Natural killer cell (primary cell): ENCODE measurements at regions of chr3 and their contacts with region 1.

Region 1: GRCh38 chr3:67113802-67114407 is 115.8 kb downstream of the KBTBD8 start:
- DNase-seq: peak; percentile 55 to 85
- ATAC-seq: peak; percentile 88 to 99 (median 97)
- H3K4me3 ChIP-seq: no peak overlapping the region
- H3K4me3 Mint-ChIP-seq: no peak overlapping the region
- H3K27ac ChIP-seq: no peak overlapping the region
- H3K27ac Mint-ChIP-seq: no peak overlapping the region
- H3K4me1 ChIP-seq: no peaks in the 10 kb centered on the region
- H3K4me1 Mint-ChIP-seq: peaks cover 0 to 9% of the 10 kb centered on the region in 2 donors
- H3K27me3 ChIP-seq: no peaks in the 10 kb centered on the region
- H3K27me3 Mint-ChIP-seq: peaks cover 5 to 7% of the 10 kb centered on the region in 2 donors
- CTCF ChIP-seq: peak; percentile 81

Region 2: GRCh38 chr3:66971891-66972551 is 141.9 kb before region 1 on chr3:
- intact Hi-C with region 1: loop called (anchors 5 kb)
- DNase-seq: peak; percentile 38 to 79
- ATAC-seq: peak; percentile 87 to 94 (median 91)
- H3K4me3 ChIP-seq: peak overlapping the region; percentile 31
- H3K4me3 Mint-ChIP-seq: peak overlapping the region; percentile 83
- H3K27ac ChIP-seq: peak overlapping the region; percentile 47
- H3K27ac Mint-ChIP-seq: peak overlapping the region in 1 of 2 donors; percentile 81
- H3K4me1 ChIP-seq: peaks cover 9% of the 10 kb centered on the region
- H3K4me1 Mint-ChIP-seq: peaks cover 12 to 13% of the 10 kb centered on the region in 2 donors
- H3K27me3 ChIP-seq: peaks cover 3% of the 10 kb centered on the region
- H3K27me3 Mint-ChIP-seq: peaks cover 6 to 20% of the 10 kb centered on the region in 2 donors
- CTCF ChIP-seq: peak; percentile 88

Region 3: GRCh38 chr3:67349551-67350174 is 235.8 kb after region 1 on chr3:
- intact Hi-C with region 1: no loop called
- DNase-seq: no peak
- ATAC-seq: peak in 1 of 3 donors; percentile 10
- H3K4me3 ChIP-seq: no peak overlapping the region
- H3K4me3 Mint-ChIP-seq: no peak overlapping the region
- H3K27ac ChIP-seq: no peak overlapping the region
- H3K27ac Mint-ChIP-seq: no peak overlapping the region
- H3K4me1 ChIP-seq: no peaks in the 10 kb centered on the region
- H3K4me1 Mint-ChIP-seq: no peaks in the 10 kb centered on the region
- H3K27me3 ChIP-seq: no peaks in the 10 kb centered on the region
- H3K27me3 Mint-ChIP-seq: no peaks in the 10 kb centered on the region
- CTCF ChIP-seq: no peak

Region 4: GRCh38 chr3:68876112-68876713 is 1762.3 kb after region 1 on chr3:
- intact Hi-C with region 1: loop called (anchors 1 kb)
- DNase-seq: peak in 1 of 2 donors; percentile 74
- ATAC-seq: peak in 2 of 3 donors; percentile 55 to 74
- H3K4me3 ChIP-seq: no peak overlapping the region
- H3K4me3 Mint-ChIP-seq: no peak overlapping the region
- H3K27ac ChIP-seq: no peak overlapping the region
- H3K27ac Mint-ChIP-seq: no peak overlapping the region
- H3K4me1 ChIP-seq: no peaks in the 10 kb centered on the region
- H3K4me1 Mint-ChIP-seq: no peaks in the 10 kb centered on the region
- H3K27me3 ChIP-seq: peaks cover 2% of the 10 kb centered on the region
- H3K27me3 Mint-ChIP-seq: peaks cover 8 to 40% of the 10 kb centered on the region in 2 donors
- CTCF ChIP-seq: peak; percentile 85

Region 5: DNA sequence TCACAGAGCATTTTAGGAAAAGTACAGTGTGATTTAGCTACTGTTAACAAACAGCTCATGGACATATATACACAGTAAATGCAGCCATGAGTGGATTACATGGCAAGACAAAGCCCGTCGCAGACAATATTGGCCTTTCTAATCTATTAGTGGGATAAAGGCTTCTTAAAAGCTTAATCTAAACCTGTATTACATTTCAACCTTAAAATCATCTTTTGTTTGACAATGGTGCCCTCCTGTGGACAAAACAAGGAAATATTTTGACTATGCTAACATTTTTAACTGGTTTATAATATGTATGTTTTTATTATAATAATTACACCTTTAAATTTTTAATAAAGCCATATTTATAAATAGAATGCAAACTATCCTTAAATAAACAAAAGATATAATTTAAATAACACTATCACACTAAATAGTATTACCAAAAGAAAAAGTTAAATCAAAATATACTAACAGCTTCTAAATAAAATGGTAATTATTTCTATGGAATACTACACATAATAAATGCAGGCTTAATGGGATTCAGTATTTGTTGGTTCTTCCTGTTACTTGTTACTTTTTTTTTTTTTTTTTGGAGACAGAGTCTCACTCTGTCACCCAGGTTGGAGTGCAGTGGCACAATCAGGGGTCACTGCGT is 1779.8 kb after region 1 on chr3:
- intact Hi-C with region 1: loop called (anchors 5 kb)
- DNase-seq: peak in 1 of 2 donors; percentile 68
- ATAC-seq: no peak
- H3K4me3 ChIP-seq: no peak overlapping the region
- H3K4me3 Mint-ChIP-seq: no peak overlapping the region
- H3K27ac ChIP-seq: no peak overlapping the region
- H3K27ac Mint-ChIP-seq: no peak overlapping the region
- H3K4me1 ChIP-seq: no peaks in the 10 kb centered on the region
- H3K4me1 Mint-ChIP-seq: no peaks in the 10 kb centered on the region
- H3K27me3 ChIP-seq: no peaks in the 10 kb centered on the region
- H3K27me3 Mint-ChIP-seq: peaks cover 13% of the 10 kb centered on the region in 2 donors
- CTCF ChIP-seq: peak; percentile 64